ENCODE measurements at regions of chr19 and their contacts with region 1.

Region 1: DNA sequence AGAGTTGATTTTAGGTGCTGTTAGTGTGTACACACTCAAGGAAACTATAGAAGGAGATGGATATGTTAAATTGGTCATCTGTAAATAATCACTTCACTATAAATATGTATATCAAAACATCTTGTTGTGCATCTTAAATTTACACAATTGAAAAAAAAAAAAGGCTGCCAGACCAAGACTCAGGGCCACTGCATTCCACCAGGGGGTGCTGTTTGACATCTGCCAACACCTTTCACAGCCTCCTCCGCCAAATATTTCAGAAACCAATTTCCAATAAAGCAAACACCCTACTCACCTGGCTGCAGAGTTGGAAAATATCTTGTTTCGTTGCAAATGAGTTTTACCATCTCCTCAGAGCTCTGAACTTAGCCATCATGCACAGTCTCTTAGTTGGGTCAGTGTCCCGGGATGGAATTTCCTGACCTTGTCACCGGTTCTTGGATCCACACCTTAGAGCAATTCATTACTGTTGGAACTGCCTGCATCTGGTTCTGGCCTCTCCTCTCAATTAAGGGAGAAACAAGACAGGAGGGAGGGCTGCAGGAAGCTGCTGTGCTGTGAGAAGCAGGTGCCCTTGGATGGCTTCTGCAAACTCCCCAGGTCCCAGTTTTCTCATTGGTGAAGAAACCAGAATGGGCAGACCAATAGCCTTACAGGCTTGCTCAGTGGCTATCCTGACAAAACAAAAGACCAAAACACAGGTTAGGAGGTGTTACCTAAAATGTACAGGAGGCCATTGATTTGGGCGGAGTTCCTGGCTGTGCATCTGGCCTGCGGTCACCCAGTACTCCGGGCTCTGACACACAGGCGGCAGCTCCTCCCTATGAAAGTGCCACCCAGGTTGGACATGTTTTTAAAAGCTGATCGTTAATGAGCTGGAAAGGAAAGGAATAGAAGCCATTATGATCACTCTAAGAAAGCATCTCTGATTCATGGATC is 746.6 kb downstream of the UQCRFS1 start:
- DNase-seq: peak; percentile 72
- H3K4me3 ChIP-seq: no peak overlapping the region
- H3K27ac ChIP-seq: no peak overlapping the region
- H3K4me1 ChIP-seq: peaks cover 0 to 17% (median 12%) of the 10 kb centered on the region in 4 donors
- H3K27me3 ChIP-seq: no peaks in the 10 kb centered on the region
- CTCF ChIP-seq: peak; percentile 69 to 82 (median 82)
- EP300 ChIP-seq: no peak
- POLR2A ChIP-seq: no peak

Region 2: DNA sequence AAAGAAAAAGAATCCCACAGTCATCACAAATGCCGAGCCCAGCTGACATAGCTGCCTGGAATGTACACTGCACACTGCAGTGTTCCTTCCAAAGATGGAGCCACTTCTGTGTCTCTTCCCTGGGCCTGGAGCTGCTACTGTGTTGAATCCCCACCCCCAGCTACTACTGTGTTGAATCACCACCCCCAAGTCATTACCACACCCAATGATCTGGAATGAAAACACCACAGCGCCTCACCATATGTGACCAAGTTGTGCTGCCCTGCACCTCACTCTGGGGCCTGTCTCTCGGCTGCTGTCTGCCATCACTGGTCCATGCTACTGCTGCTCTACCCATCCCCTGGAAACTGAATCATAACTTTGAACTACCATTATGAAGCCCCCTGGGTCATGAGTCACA is 114.6 kb before region 1 on chr19:
- in situ Hi-C with region 1: no loop called
- intact Hi-C with region 1: no loop called
- DNase-seq: no peak
- H3K4me3 ChIP-seq: no peak overlapping the region
- H3K27ac ChIP-seq: no peak overlapping the region
- H3K4me1 ChIP-seq: no peaks in the 10 kb centered on the region
- H3K27me3 ChIP-seq: no peaks in the 10 kb centered on the region
- CTCF ChIP-seq: no peak
- EP300 ChIP-seq: no peak
- POLR2A ChIP-seq: no peak

Region 3: GRCh38 chr19:28633319-28634018 is 167.1 kb after region 1 on chr19:
- in situ Hi-C with region 1: loop called (anchors 5 to 25 kb)
- intact Hi-C with region 1: no loop called
- DNase-seq: peak; percentile 57
- H3K4me3 ChIP-seq: no peak overlapping the region
- H3K27ac ChIP-seq: no peak overlapping the region
- H3K4me1 ChIP-seq: no peaks in the 10 kb centered on the region
- H3K27me3 ChIP-seq: no peaks in the 10 kb centered on the region
- CTCF ChIP-seq: peak; percentile 71 to 92 (median 86)
- EP300 ChIP-seq: no peak
- POLR2A ChIP-seq: no peak

Region 4: GRCh38 chr19:28710278-28710677 is 243.9 kb after region 1 on chr19:
- in situ Hi-C with region 1: loop called in 2 of 4 experiments (anchors 10 kb)
- intact Hi-C with region 1: loop called (anchors 10 kb)
- DNase-seq: no peak
- H3K4me3 ChIP-seq: no peak overlapping the region
- H3K27ac ChIP-seq: no peak overlapping the region
- H3K4me1 ChIP-seq: no peaks in the 10 kb centered on the region
- H3K27me3 ChIP-seq: no peaks in the 10 kb centered on the region
- CTCF ChIP-seq: peak; percentile 61 to 66 (median 64)
- EP300 ChIP-seq: no peak
- POLR2A ChIP-seq: no peak

Region 5: GRCh38 chr19:28864577-28865042 is 398.2 kb after region 1 on chr19:
- in situ Hi-C with region 1: loop called in 1 of 4 experiments (anchors 25 kb)
- intact Hi-C with region 1: no loop called
- DNase-seq: peak; percentile 35
- H3K4me3 ChIP-seq: no peak overlapping the region
- H3K27ac ChIP-seq: no peak overlapping the region
- H3K4me1 ChIP-seq: peaks cover 0 to 9% (median 0%) of the 10 kb centered on the region in 4 donors
- H3K27me3 ChIP-seq: no peaks in the 10 kb centered on the region
- CTCF ChIP-seq: no peak
- EP300 ChIP-seq: no peak
- POLR2A ChIP-seq: no peak

Region 6: DNA sequence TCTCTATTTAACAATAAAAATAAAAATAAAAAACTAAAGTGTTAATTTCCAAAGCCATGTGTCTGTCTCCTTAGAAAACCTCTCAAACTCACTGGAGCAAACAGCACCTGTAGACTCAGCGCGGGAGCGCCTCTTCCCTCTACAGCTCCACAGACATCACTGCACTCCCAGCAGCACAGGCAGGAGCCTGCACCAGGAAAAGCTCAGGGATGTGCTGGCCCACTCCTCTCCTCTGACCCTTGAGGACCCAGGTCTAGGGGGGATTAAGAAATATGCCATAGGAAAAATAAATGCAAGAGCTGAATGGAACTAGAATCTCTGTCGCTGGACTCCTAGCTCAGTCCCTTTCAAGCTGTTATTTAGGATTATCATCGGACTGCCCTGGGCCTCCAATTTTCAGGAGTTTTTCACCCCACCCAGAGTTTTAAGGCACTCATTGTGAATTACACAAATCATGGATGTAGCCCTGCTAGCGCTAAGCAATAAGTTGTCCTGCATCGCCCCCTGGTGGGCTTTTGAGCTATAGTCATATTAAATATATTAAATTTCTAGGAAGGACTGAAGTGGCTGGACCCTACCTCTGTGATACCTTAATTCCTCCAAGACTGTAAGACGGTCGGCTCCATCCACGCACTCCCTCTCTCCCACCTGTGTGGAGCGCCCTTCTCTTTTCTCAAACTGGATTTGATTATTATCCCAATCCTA is 412.6 kb after region 1 on chr19:
- in situ Hi-C with region 1: loop called in 2 of 4 experiments (anchors 25 kb)
- intact Hi-C with region 1: loop called (anchors 10 kb)
- DNase-seq: peak; percentile 58
- H3K4me3 ChIP-seq: no peak overlapping the region
- H3K27ac ChIP-seq: no peak overlapping the region
- H3K4me1 ChIP-seq: peaks cover 0 to 5% (median 0%) of the 10 kb centered on the region in 4 donors
- H3K27me3 ChIP-seq: no peaks in the 10 kb centered on the region
- CTCF ChIP-seq: peak; percentile 64 to 74 (median 68)
- EP300 ChIP-seq: no peak
- POLR2A ChIP-seq: no peak

Measured in transverse colon (tissue), 4 donors.